Ascending aorta (tissue), 2 donors: ENCODE measurements at regions of chr3 and their contacts with region 1.

Region 1: GRCh38 chr3:149717391-149718056 is 34.8 kb downstream of the COMMD2 start:
- DNase-seq: peak in 1 of 2 donors; percentile 83
- H3K4me3 ChIP-seq: peak overlapping the region in 1 of 2 donors; percentile 16
- H3K27ac ChIP-seq: no peak overlapping the region
- H3K4me1 ChIP-seq: peaks cover 2 to 3% of the 10 kb centered on the region in 2 donors
- H3K27me3 ChIP-seq: no peaks in the 10 kb centered on the region
- CTCF ChIP-seq: peak; percentile 51 to 73 (median 69)

Region 2: GRCh38 chr3:149494022-149494758 is 223.3 kb before region 1 on chr3:
- intact Hi-C with region 1: loop called (anchors 1 kb)
- DNase-seq: peak in 1 of 2 donors; percentile 81
- H3K4me3 ChIP-seq: no peak overlapping the region
- H3K27ac ChIP-seq: no peak overlapping the region
- H3K4me1 ChIP-seq: peaks cover 0 to 4% of the 10 kb centered on the region in 2 donors
- H3K27me3 ChIP-seq: no peaks in the 10 kb centered on the region
- CTCF ChIP-seq: peak; percentile 75 to 89 (median 85)

Region 3: GRCh38 chr3:149512209-149512782 is 205.2 kb before region 1 on chr3:
- intact Hi-C with region 1: loop called (anchors 1 kb)
- DNase-seq: peak in 1 of 2 donors; percentile 83
- H3K4me3 ChIP-seq: no peak overlapping the region
- H3K27ac ChIP-seq: no peak overlapping the region
- H3K4me1 ChIP-seq: peaks cover 1 to 20% of the 10 kb centered on the region in 2 donors
- H3K27me3 ChIP-seq: no peaks in the 10 kb centered on the region
- CTCF ChIP-seq: peak; percentile 66 to 85 (median 71)

Region 4: DNA sequence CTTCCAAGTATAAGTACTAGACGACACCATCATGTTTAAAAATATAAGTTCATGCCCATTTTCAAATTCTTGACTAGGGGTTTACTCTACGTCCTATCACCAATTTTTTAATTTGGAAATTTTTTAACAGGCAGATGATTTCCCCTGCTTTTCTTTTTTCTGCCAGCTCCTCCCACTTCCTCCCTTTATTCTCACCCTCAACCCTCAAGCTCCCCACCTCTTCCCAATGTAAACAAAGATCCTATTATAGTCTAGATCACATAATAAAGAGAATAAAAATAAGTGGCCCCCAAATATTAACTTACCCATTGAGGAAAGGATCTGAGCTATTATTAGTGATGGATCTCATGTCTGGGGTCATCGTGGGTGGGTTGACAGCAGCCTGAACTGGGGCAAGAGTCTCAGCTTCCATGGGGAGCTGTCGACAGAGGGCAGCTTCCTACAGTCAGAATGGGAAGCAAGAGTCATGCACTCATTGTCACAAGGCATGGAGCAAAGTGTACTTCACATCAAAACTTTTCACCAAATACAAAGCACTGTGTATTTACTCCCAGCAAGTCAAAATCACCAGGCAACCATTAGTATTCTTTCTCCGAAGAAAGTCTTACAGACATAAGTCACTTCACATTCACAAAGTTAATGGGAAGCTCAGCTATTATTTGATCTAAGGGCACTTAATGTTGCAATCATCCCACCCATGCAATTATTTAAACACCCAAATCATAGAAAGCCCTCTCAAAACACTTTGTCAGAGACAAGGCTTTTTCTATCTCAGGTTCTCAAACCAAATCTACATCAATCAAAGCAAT is 189.8 kb before region 1 on chr3:
- intact Hi-C with region 1: loop called (anchors 1 kb)
- DNase-seq: no peak
- H3K4me3 ChIP-seq: no peak overlapping the region
- H3K27ac ChIP-seq: peak overlapping the region; percentile 27 to 69
- H3K4me1 ChIP-seq: peaks cover 0 to 32% of the 10 kb centered on the region in 2 donors
- H3K27me3 ChIP-seq: no peaks in the 10 kb centered on the region
- CTCF ChIP-seq: peak in 2 of 3 experiments; percentile 22 to 48

Region 5: GRCh38 chr3:149566292-149566975 is 151.1 kb before region 1 on chr3:
- intact Hi-C with region 1: loop called (anchors 5 kb)
- DNase-seq: no peak
- H3K4me3 ChIP-seq: no peak overlapping the region
- H3K27ac ChIP-seq: peak overlapping the region; percentile 44 to 50
- H3K4me1 ChIP-seq: peaks cover 0 to 29% of the 10 kb centered on the region in 2 donors
- H3K27me3 ChIP-seq: no peaks in the 10 kb centered on the region
- CTCF ChIP-seq: no peak